ENCODE measurements at regions of chr10 and their contacts with region 1.

Region 1: DNA sequence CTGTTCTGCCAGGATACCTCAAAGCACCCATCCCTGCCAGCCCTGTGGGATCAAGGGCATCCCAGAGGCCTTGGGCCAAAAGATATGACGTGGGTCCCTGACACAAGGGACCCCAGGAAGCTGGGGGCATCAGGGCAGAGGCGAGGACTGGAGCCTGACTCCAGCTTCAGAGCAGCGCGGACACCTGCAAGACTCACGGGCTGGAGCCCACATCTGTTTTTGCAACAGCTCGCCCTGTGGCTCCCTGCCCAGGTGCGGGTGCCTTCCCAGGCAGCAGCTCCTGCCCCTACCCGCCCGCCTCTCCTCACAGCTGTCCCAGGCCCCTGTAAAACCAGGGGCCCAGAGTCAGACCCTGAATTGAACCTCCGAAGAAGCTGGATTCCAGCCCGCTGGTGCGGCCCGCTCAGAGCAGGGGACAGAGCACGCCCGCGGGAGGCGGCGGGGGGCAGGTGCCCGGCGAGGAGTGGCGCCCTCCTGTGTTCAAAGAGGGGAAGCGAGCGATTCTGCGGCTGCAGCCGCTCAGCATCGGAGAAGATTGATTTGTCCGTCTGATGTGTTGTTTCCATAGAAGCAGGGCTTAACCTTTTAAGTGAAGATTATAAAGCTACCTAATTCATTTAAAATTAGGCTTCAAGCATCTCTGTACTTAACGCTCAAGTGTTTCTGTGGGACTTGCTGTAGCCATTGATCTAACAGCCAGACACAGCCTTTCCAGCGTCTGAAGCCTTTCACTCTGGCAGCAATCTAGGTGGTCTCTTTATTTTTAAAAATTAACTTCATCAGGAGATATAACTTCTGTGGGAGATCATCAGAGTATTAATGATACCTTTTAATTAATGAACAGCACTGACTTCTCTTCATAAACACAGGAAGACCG is 88.4 kb downstream of the BEND7 start:
- DNase-seq: peak; percentile 75
- H3K4me3 Mint-ChIP-seq: peak overlapping the region; percentile 61
- H3K27ac Mint-ChIP-seq: no peak overlapping the region
- H3K4me1 Mint-ChIP-seq: peaks cover 7% of the 10 kb centered on the region
- H3K27me3 Mint-ChIP-seq: peaks cover 38% of the 10 kb centered on the region

Region 2: GRCh38 chr10:13414894-13415293 is 25.5 kb before region 1 on chr10:
- CTCF ChIA-PET with region 1: interaction called, 11 read pairs
- intact Hi-C with region 1: no loop called
- DNase-seq: peak; percentile 7
- H3K4me3 Mint-ChIP-seq: no peak overlapping the region
- H3K27ac Mint-ChIP-seq: no peak overlapping the region
- H3K4me1 Mint-ChIP-seq: no peaks in the 10 kb centered on the region
- H3K27me3 Mint-ChIP-seq: peaks cover 4% of the 10 kb centered on the region